Activated CD4-positive, alpha-beta T cell treated with anti-CD3 and anti-CD28 coated beads, Interleukin-2, amount 10 ng/mL, durations not matched to agents 24 days and 14 days (primary cell): ENCODE measurements at regions of chr15 and their contacts with region 1.

Region 1: DNA sequence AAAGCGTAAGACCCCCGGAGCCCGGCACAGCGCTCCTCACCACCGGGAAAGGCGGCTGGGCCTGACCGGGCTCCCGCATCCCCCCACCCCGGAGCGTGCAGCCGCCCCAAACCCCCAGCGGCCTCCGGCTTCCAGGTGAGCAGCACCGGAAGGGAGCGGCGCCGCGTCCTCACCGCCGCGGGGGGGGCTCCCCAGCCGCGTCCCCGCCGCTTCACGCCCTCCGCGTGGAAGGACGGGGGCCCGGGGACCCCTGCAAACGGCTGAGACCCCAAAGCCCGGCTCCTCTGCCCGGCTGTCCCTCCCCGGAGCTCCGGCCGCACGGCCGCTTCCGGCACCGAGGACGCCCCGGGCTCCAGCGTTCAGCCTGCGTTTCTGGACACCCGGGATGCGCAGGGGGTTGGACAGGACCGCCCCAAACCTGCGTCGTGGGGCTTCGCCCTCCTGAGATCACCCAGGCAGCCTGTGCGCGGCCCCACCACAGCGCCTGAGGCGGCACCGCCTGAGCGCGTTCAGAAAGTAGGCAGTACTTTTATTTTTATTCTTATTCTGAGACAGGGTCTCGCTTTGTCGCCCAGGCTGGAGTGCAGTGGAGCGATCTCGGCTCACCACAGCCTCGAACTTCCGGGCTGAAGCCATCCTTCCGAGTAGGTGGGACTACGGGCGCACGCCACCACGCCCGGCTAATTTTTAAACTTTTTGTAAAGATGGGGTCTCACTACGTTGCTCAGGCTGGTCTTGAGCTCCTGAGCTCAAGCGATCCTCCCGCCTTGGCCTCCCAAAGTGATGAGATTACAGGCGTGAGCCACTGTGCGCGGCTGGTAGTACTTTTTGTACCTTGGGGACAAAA is 51.6 kb upstream of the BLM start:
- DNase-seq: peak; percentile 90
- H3K4me3 Mint-ChIP-seq: peak overlapping the region; percentile 87
- H3K27ac Mint-ChIP-seq: peak overlapping the region; percentile 92
- H3K4me1 Mint-ChIP-seq: peaks cover 53% of the 10 kb centered on the region
- H3K27me3 Mint-ChIP-seq: peaks cover 3% of the 10 kb centered on the region

Region 2: GRCh38 chr15:90680371-90680935 is 14.9 kb after region 1 on chr15:
- intact Hi-C with region 1: loop called (anchors 1 kb)
- DNase-seq: no peak
- H3K4me3 Mint-ChIP-seq: no peak overlapping the region
- H3K27ac Mint-ChIP-seq: peak overlapping the region; percentile 41
- H3K4me1 Mint-ChIP-seq: peaks cover 51% of the 10 kb centered on the region
- H3K27me3 Mint-ChIP-seq: no peaks in the 10 kb centered on the region

Region 3: DNA sequence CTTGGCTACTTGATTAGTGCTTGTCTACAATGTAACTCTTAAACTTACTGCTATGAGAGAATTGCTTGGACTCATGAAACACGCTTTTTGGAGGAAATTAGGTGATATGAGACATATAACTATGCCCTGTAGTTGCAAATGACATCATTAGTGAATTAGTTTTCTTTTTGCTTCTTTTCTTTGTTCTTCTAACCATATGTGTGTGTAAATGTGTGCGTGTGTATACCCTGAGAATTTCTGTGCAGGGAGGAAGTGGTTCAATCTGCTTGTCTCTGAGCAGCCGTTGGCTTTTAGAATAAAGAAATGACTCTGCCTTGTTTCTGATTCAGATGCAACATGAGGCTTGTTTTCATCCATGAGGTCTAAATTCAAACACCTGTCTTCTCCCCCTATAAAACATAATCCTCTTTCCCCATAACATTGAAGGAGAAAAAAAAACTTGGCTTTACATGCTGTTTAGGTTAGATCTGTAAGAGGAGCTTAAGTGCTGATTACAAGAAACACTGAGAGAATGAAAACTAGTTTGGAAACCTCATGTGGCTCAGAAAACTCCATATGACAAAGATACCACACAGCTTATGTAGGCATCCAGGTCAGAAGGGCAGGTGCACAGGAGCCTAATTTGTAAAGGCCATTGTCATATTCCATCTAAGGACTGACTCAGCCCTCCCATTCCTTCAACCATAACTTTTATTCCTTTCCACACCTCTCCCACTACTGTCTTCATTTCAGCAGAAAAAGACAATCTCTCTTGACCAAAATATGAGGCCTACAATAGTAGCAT is 21.1 kb after region 1 on chr15:
- intact Hi-C with region 1: loop called (anchors 2 kb)
- DNase-seq: peak; percentile 87
- H3K4me3 Mint-ChIP-seq: peak overlapping the region; percentile 58
- H3K27ac Mint-ChIP-seq: peak overlapping the region; percentile 96
- H3K4me1 Mint-ChIP-seq: peaks cover 47% of the 10 kb centered on the region
- H3K27me3 Mint-ChIP-seq: no peaks in the 10 kb centered on the region

Region 4: GRCh38 chr15:90697181-90697580 is 31.7 kb after region 1 on chr15:
- intact Hi-C with region 1: no loop called
- DNase-seq: peak; percentile 81
- H3K4me3 Mint-ChIP-seq: peak overlapping the region; percentile 40
- H3K27ac Mint-ChIP-seq: peak overlapping the region; percentile 78
- H3K4me1 Mint-ChIP-seq: peaks cover 24% of the 10 kb centered on the region
- H3K27me3 Mint-ChIP-seq: no peaks in the 10 kb centered on the region

Region 5: DNA sequence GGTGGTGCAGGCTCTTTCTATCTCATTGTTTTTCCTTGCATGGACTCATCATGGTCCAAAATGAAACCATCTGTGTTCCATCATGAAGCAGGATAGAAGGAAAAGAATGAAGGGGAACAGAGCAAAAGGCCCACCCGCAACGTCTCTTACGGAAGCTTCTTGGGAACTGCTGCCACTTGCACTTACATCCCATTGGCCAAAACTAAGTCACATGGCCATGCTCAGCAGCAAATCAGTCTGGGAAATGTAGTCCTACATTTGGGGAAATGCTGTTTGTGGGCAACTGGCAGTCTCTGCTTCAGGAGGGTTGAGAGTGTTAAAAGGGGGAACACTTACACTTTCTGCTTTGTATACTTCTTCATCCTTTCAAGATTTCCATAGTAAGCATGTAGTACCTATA is 626.2 kb after region 1 on chr15:
- intact Hi-C with region 1: no loop called
- DNase-seq: no peak
- H3K4me3 Mint-ChIP-seq: no peak overlapping the region
- H3K27ac Mint-ChIP-seq: no peak overlapping the region
- H3K4me1 Mint-ChIP-seq: no peaks in the 10 kb centered on the region
- H3K27me3 Mint-ChIP-seq: peaks cover 11% of the 10 kb centered on the region